Adrenal gland (tissue), 19 donors: ENCODE measurements at regions of chr3 and their contacts with region 1.

Region 1: GRCh38 chr3:169980055-169980454 is 13.4 kb downstream of the SEC62 start:
- DNase-seq: no peak
- H3K4me3 ChIP-seq: no peak overlapping the region
- H3K27ac ChIP-seq: no peak overlapping the region
- H3K4me1 ChIP-seq: no peaks in the 10 kb centered on the region
- H3K27me3 ChIP-seq: no peaks in the 10 kb centered on the region
- CTCF ChIP-seq: no peak
- POLR2A ChIP-seq: no peak

Region 2: GRCh38 chr3:169813757-169814517 is 166.1 kb before region 1 on chr3:
- intact Hi-C with region 1: no loop called
- DNase-seq: peak in 2 of 7 donors; percentile 10 to 19
- H3K4me3 ChIP-seq: peak overlapping the region in 1 of 4 donors; percentile 59
- H3K27ac ChIP-seq: no peak overlapping the region
- H3K4me1 ChIP-seq: peaks cover 3 to 9% of the 10 kb centered on the region in 2 donors
- H3K27me3 ChIP-seq: no peaks in the 10 kb centered on the region
- CTCF ChIP-seq: peak in 2 of 6 experiments; percentile 12 to 24
- POLR2A ChIP-seq: no peak

Region 3: DNA sequence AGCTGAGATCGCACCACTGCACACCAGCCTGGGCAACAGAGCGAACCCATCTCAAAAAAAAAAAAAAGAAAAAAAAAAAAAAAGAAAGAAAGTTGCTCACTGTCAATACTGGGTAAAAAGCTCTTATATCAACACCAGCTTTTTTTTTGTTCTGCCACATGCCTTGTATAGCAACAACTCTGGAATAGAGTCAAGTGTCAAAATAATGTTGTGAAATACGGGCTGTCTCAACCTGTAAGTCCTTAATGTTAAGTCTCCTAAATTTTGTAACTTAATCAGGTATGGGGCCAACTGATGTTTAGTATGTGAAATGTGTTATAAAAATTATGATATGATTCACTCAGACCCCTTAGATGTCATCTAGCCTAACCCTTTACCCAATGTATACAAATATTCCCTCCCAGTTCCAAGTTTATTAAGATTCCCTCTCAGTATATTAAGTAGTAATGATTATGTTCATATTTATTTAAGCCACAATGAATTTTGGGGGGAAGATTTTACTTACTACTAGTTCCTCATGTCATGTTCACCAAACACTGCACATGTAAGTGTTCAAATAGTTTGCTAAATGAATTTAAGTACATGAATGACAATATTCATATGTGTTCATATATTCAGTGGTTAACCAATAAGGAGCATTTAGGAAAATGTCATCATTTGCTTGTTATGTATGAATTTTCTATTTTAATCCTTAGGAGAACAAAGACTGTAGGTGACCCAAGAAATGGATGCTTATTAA is 110.0 kb after region 1 on chr3:
- intact Hi-C with region 1: loop called in 1 of 2 experiments (anchors 10 kb)
- DNase-seq: no peak
- H3K4me3 ChIP-seq: no peak overlapping the region
- H3K27ac ChIP-seq: no peak overlapping the region
- H3K4me1 ChIP-seq: no peaks in the 10 kb centered on the region
- H3K27me3 ChIP-seq: no peaks in the 10 kb centered on the region
- CTCF ChIP-seq: no peak
- POLR2A ChIP-seq: no peak